Activated CD4-positive, alpha-beta memory T cell treated with anti-CD3 and anti-CD28 coated beads, Interleukin-2, amount 10 ng/mL, durations not matched to agents 7 days and 5 days (primary cell): ENCODE measurements at regions of chr4 and their contacts with region 1.

Region 1: GRCh38 chr4:152500800-152501434 is 35.0 kb downstream of the FBXW7 start:
- DNase-seq: peak; percentile 51
- H3K4me3 Mint-ChIP-seq: no peak overlapping the region
- H3K27ac Mint-ChIP-seq: no peak overlapping the region
- H3K4me1 Mint-ChIP-seq: peaks cover 25% of the 10 kb centered on the region
- H3K27me3 Mint-ChIP-seq: no peaks in the 10 kb centered on the region

Region 2: DNA sequence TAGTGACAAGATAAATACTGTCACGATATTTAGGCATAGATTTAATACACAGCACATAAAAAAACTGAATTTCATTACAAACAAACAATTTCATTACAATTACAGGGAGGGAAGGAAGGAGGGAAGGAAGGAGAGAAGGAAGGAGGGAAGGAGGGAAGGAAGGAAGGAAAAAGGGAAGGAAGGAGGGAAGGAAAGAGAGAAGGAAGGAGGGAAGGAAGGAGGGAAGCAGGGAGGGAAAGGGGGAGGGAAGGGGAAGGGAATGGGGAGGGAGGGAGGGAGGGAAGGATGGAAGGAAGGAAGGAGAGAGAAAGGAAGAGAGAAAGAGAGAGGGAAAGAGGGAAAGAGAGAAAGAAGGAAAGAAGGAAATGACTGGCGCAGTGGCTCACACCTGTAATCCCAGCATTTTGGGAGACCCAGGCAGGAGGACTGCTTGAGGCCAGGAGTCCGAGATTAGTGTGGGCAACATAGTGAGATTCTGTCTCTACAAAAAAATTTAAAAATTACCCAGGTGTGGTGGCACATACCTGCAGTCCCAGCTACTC is 29.6 kb before region 1 on chr4:
- CTCF ChIA-PET with region 1: interaction called, 11 read pairs
- POLR2A ChIA-PET with region 1: no interaction called
- DNase-seq: no peak
- H3K4me3 Mint-ChIP-seq: no peak overlapping the region
- H3K27ac Mint-ChIP-seq: no peak overlapping the region
- H3K4me1 Mint-ChIP-seq: no peaks in the 10 kb centered on the region
- H3K27me3 Mint-ChIP-seq: no peaks in the 10 kb centered on the region

Region 3: GRCh38 chr4:152515678-152516077 is 14.8 kb after region 1 on chr4:
- CTCF ChIA-PET with region 1: interaction called, 14 read pairs
- POLR2A ChIA-PET with region 1: no interaction called
- DNase-seq: no peak
- H3K4me3 Mint-ChIP-seq: no peak overlapping the region
- H3K27ac Mint-ChIP-seq: no peak overlapping the region
- H3K4me1 Mint-ChIP-seq: peaks cover 35% of the 10 kb centered on the region
- H3K27me3 Mint-ChIP-seq: no peaks in the 10 kb centered on the region

Region 4: GRCh38 chr4:152633118-152633517 is 132.2 kb after region 1 on chr4:
- CTCF ChIA-PET with region 1: interaction called, 155 read pairs
- POLR2A ChIA-PET with region 1: interaction called, 3 read pairs
- DNase-seq: no peak
- H3K4me3 Mint-ChIP-seq: no peak overlapping the region
- H3K27ac Mint-ChIP-seq: no peak overlapping the region
- H3K4me1 Mint-ChIP-seq: peaks cover 11% of the 10 kb centered on the region
- H3K27me3 Mint-ChIP-seq: no peaks in the 10 kb centered on the region

Region 5: DNA sequence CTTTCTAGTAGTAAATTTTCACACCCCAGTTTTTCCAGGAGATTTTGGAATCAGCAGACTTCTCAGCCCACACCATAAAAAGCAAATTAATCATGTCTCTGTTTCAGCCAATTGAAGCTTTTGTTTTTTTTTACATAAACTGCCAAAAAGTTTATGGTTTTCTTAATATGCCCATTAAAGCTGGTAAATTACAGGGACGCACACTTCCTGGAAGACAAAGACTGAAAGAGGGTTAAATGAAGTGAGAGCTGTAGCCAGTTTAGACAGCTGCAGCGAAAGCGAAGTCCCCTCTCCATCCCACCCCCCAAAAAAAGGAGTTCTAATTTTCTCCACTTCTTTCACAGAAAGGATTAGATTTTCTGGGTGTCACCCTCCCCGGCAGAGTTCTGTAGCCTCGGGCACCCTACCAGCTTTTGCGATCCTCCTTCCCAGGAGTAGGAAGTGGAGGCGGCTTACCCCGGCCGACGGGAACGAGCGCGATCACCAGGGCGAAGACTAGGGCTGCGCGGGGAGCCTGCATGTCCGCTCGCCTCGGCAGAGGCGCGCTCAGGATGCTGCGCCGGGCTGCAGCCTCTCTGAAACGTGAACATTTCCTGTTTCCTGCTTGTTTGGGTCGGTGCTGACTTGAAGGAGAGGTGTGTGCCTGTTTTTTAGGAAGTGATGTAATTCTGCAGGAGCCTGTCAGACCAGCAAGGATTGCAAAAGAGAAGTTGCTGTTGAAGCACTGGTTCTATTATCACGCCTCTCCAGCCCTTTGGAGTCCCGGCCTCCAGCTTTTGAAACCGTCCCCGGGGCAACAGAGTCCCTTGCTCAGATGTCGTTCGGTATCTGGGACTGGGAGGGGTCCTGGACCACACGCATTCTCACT is 178.7 kb after region 1 on chr4 and contains the start of gene TMEM154:
- CTCF ChIA-PET with region 1: interaction called, 16 read pairs
- POLR2A ChIA-PET with region 1: no interaction called
- DNase-seq: peak; percentile 84
- H3K4me3 Mint-ChIP-seq: peak within 1 kb of the TSS; percentile 90
- H3K27ac Mint-ChIP-seq: peak within 1 kb of the TSS; percentile 92
- H3K4me1 Mint-ChIP-seq: peaks cover 74% of the 10 kb centered on the region
- H3K27me3 Mint-ChIP-seq: no peaks in the 10 kb centered on the region
- total RNA-seq, gene TMEM154: 47.1 to 50.0 TPM

Region 6: GRCh38 chr4:152779513-152780266 is 278.8 kb after region 1 on chr4 and contains the starts of genes ARFIP1 and TIGD4:
- CTCF ChIA-PET with region 1: interaction called, 20 read pairs
- POLR2A ChIA-PET with region 1: no interaction called
- DNase-seq: peak; percentile 97
- H3K4me3 Mint-ChIP-seq: peak within 1 kb of the TSS; percentile 99
- H3K27ac Mint-ChIP-seq: peak within 1 kb of the TSS; percentile 94
- H3K4me1 Mint-ChIP-seq: peaks cover 46% of the 10 kb centered on the region
- H3K27me3 Mint-ChIP-seq: peaks cover 11% of the 10 kb centered on the region
- total RNA-seq, gene ARFIP1: 15.5 to 16.3 TPM
- total RNA-seq, gene TIGD4: 0.13 to 0.35 TPM

Region 7: GRCh38 chr4:152820073-152820472 is 319.2 kb after region 1 on chr4:
- CTCF ChIA-PET with region 1: no interaction called
- POLR2A ChIA-PET with region 1: no interaction called
- DNase-seq: no peak
- H3K4me3 Mint-ChIP-seq: no peak overlapping the region
- H3K27ac Mint-ChIP-seq: no peak overlapping the region
- H3K4me1 Mint-ChIP-seq: peaks cover 11% of the 10 kb centered on the region
- H3K27me3 Mint-ChIP-seq: no peaks in the 10 kb centered on the region